ENCODE measurements at regions of chr19 and their contacts with region 1.

Region 1: GRCh38 chr19:6516659-6517291 is 14.1 kb upstream of the TNFSF9 start:
- DNase-seq: peak; percentile 86
- H3K4me3 Mint-ChIP-seq: peak overlapping the region; percentile 96
- H3K27ac Mint-ChIP-seq: peak overlapping the region; percentile 93
- H3K4me1 Mint-ChIP-seq: peaks cover 34% of the 10 kb centered on the region
- H3K27me3 Mint-ChIP-seq: peaks cover 2% of the 10 kb centered on the region

Region 2: GRCh38 chr19:6372594-6373095 is 144.1 kb before region 1 on chr19 and contains the start of gene ALKBH7:
- intact Hi-C with region 1: loop called (anchors 1 kb)
- DNase-seq: peak; percentile 95
- H3K4me3 Mint-ChIP-seq: peak within 1 kb of the TSS; percentile 81
- H3K27ac Mint-ChIP-seq: peak within 1 kb of the TSS; percentile 81
- H3K4me1 Mint-ChIP-seq: peaks cover 11% of the 10 kb centered on the region
- H3K27me3 Mint-ChIP-seq: no peaks in the 10 kb centered on the region
- total RNA-seq, gene ALKBH7: 24.8 and 27.1 TPM in 2 replicates

Region 3: GRCh38 chr19:6501740-6502648 is 14.8 kb before region 1 on chr19 and contains the start of gene TUBB4A:
- intact Hi-C with region 1: loop called (anchors 1 kb)
- DNase-seq: peak; percentile 31
- H3K4me3 Mint-ChIP-seq: peak within 1 kb of the TSS; percentile 82
- H3K27ac Mint-ChIP-seq: no peak within 1 kb of the TSS
- H3K4me1 Mint-ChIP-seq: peaks cover 21% of the 10 kb centered on the region
- H3K27me3 Mint-ChIP-seq: peaks cover 18% of the 10 kb centered on the region
- total RNA-seq, gene TUBB4A: 2.3 and 3.0 TPM in 2 replicates

Region 4: GRCh38 chr19:6551607-6552450 is 35.1 kb after region 1 on chr19:
- intact Hi-C with region 1: loop called (anchors 5 kb)
- DNase-seq: peak; percentile 40
- H3K4me3 Mint-ChIP-seq: no peak overlapping the region
- H3K27ac Mint-ChIP-seq: no peak overlapping the region
- H3K4me1 Mint-ChIP-seq: peaks cover 6% of the 10 kb centered on the region
- H3K27me3 Mint-ChIP-seq: peaks cover 8% of the 10 kb centered on the region

Region 5: GRCh38 chr19:6610934-6611852 is 94.4 kb after region 1 on chr19:
- intact Hi-C with region 1: loop called (anchors 5 kb)
- DNase-seq: no peak
- H3K4me3 Mint-ChIP-seq: no peak overlapping the region
- H3K27ac Mint-ChIP-seq: no peak overlapping the region
- H3K4me1 Mint-ChIP-seq: peaks cover 25% of the 10 kb centered on the region
- H3K27me3 Mint-ChIP-seq: peaks cover 27% of the 10 kb centered on the region

Region 6: DNA sequence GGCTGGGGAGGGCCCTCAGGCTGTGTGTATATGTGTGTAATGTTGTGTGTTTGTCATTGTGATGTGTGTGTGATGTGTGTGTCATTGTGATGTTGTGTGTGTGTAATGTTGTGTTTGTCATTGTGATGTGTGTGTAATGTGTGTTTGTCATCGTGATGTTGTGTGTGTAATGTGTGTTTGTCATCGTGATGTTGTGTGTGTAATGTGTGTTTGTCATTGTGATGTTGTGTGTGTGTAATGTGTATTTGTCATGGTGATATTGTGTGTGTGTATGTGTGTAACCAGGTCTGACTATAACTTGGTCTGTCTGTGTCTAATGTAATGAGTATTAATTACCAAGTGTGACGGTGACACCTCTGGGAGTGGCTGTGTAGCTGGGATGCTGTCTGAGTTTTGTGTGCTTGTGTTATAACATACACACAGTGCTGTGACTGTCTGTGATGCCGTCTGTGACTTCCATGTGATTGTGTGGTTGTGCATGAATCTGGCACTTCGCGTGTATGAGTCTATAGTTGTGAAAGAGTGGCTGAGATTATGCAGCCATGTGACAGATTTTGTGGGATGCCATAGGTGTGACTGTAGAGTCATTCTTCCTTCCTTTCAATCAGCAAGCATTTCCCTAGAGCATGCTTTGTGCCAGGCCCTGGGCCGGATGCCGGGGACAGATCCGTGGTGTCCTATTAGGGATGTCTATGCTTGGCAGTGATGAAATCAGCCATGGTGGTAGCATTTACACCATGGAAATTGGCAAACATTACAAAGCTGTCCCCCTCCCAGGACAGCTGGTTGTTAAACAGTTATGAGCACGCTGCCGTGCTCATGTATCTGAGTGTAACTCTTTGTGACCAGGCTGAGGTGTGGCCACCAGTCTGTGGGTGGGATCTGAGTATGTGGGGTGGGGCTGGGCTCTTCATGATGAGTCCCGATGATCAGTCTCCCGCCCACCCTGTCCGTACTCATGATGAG is 146.7 kb after region 1 on chr19:
- intact Hi-C with region 1: loop called (anchors 2 kb)
- DNase-seq: no peak
- H3K4me3 Mint-ChIP-seq: no peak overlapping the region
- H3K27ac Mint-ChIP-seq: no peak overlapping the region
- H3K4me1 Mint-ChIP-seq: peaks cover 12% of the 10 kb centered on the region
- H3K27me3 Mint-ChIP-seq: no peaks in the 10 kb centered on the region

Region 7: DNA sequence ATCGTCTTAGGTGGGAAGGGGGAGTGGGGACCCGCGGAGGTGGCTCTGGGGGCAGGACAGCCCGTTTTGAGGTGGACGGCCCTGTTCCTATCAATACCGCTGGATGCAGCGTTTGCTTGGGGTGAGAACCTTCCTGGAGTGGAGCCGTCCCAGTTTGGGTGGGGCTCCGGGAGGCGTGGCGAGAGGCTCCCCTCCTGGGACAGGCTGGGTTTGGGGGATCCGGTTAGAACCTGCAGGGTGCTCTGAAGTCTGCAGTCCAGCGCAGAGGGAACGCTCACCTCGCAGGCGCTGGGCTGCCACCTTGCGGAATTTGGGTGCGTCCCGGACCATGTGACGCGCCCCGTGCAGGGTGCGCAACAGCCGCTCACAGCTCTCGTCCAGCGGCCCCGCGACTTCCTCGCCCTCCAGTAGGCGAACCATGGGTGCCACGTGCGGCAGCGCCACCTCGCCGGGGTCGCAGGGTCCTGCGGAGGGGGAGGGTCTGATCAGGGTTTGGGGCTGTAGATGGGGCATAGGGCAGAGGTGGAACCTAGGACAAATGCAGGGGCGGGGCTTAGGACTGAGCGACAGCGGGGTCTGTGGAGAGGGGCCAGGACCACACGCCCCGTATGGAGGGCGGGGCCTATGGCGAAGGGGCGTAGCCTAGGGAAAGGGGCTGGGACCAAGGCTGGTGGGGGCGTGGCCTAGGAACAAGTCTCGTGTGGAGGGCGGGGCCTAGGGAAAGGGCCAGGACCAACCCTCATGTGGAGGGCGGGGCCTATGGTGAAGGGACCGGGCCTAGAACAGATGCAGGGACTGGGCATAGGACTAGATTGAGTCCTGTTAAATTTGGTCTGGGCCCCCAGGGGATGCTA is 236.6 kb after region 1 on chr19:
- intact Hi-C with region 1: loop called (anchors 1 kb)
- DNase-seq: peak; percentile 76
- H3K4me3 Mint-ChIP-seq: peak overlapping the region; percentile 75
- H3K27ac Mint-ChIP-seq: peak overlapping the region; percentile 88
- H3K4me1 Mint-ChIP-seq: peaks cover 19% of the 10 kb centered on the region
- H3K27me3 Mint-ChIP-seq: no peaks in the 10 kb centered on the region

Measured in activated T-helper 1 cell treated with anti-CD3 and anti-CD28 coated beads, Interleukin-12 subunit alpha, Interleukin-12 subunit beta, Interleukin-2, Interleukin-4 antibody, amounts not matched to agents 30 ng/mL and 10 ng/mL and 1 ng/mL, durations not matched to agents 14 hours and 24 hours and 36 hours (primary cell).